Naive thymus-derived CD4-positive, alpha-beta T cell (primary cell): ENCODE measurements at regions of chr17 and their contacts with region 1.

Region 1: DNA sequence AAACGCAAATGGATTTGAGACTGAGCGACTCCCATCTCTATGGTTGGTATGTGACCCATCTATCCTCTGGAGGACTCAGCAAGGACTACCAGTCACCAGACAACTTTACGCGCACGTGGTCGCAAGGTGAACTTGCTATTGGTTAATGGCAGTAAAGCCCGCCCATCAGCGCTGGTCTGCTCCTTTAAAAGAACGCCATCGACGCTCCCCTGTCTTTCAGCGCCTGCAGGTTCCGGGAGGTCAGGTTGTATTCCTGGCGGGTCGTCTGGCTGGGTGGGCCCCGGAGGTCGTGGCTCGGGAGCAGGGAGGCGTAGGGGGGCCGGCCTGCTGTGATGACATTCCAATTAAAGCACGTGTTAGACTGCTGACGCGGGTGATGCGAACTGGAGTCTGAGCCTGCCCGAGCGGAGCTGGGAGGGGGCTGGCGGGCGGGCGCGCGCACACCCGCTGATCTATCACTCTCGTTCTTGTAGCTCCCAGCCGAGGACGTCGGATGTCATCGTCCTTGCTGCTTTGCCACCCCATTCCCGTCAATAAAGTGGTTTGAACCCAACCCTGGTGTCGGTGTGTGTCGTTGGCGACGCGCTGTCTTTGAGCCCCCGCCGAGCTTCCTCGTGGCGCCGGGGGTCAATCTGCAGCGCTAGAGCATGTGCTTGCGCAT is 15.9 kb upstream of the ERN1 start:
- DNase-seq: peak; percentile 85 to 99 (median 96)
- ATAC-seq: peak; percentile 98
- H3K4me3 ChIP-seq: peak overlapping the region; percentile 72
- H3K4me3 Mint-ChIP-seq: no peak overlapping the region
- H3K27ac ChIP-seq: peak overlapping the region; percentile 91
- H3K27ac Mint-ChIP-seq: no peak overlapping the region
- H3K4me1 ChIP-seq: peaks cover 11 to 12% of the 10 kb centered on the region in 2 donors
- H3K4me1 Mint-ChIP-seq: peaks cover 11 to 34% (median 27%) of the 10 kb centered on the region in 7 donors
- H3K27me3 ChIP-seq: no peaks in the 10 kb centered on the region
- H3K27me3 Mint-ChIP-seq: no peaks in the 10 kb centered on the region

Region 2: GRCh38 chr17:63911657-63912426 is 234.0 kb before region 1 on chr17:
- CTCF ChIA-PET with region 1: interaction called, 3 read pairs
- POLR2A ChIA-PET with region 1: no interaction called
- intact Hi-C with region 1: loop called (anchors 5 kb)
- DNase-seq: peak; percentile 30 to 64 (median 49)
- ATAC-seq: peak; percentile 88
- H3K4me3 ChIP-seq: no peak overlapping the region
- H3K4me3 Mint-ChIP-seq: peak overlapping the region in 1 of 10 donors; percentile 25
- H3K27ac ChIP-seq: no peak overlapping the region
- H3K27ac Mint-ChIP-seq: peak overlapping the region in 1 of 9 donors; percentile 78
- H3K4me1 ChIP-seq: no peaks in the 10 kb centered on the region
- H3K4me1 Mint-ChIP-seq: peaks cover 0 to 10% (median 0%) of the 10 kb centered on the region in 7 donors
- H3K27me3 ChIP-seq: no peaks in the 10 kb centered on the region
- H3K27me3 Mint-ChIP-seq: peaks cover 0 to 28% (median 0%) of the 10 kb centered on the region in 5 donors

Region 3: DNA sequence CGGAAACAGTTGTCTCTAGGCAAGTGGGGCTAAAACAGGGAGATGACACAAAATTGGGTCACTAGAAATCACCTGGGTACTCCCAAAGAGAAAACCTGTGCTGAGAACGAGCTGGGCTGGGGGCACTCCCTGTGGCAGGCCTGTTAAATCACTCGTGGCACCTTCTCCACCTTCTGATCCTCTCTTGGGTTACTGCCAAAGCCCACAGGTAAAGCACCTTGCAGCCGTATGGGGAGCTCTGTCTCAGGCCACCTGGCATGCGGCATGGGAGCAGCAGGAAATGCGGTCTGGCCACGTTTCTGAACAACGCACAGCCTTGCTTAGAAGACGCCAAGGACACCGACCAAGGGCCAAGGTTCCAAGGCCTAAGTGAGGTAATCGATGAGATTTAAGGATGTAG is 104.0 kb before region 1 on chr17:
- CTCF ChIA-PET with region 1: no interaction called
- POLR2A ChIA-PET with region 1: interaction called, 11 read pairs
- intact Hi-C with region 1: no loop called
- DNase-seq: no peak
- ATAC-seq: no peak
- H3K4me3 ChIP-seq: no peak overlapping the region
- H3K4me3 Mint-ChIP-seq: no peak overlapping the region
- H3K27ac ChIP-seq: no peak overlapping the region
- H3K27ac Mint-ChIP-seq: peak overlapping the region in 5 of 9 donors; percentile 32 to 75 (median 57)
- H3K4me1 ChIP-seq: no peaks in the 10 kb centered on the region
- H3K4me1 Mint-ChIP-seq: peaks cover 0 to 27% (median 5%) of the 10 kb centered on the region in 7 donors
- H3K27me3 ChIP-seq: no peaks in the 10 kb centered on the region
- H3K27me3 Mint-ChIP-seq: no peaks in the 10 kb centered on the region

Region 4: GRCh38 chr17:64120127-64120810 is 25.6 kb before region 1 on chr17:
- CTCF ChIA-PET with region 1: no interaction called
- POLR2A ChIA-PET with region 1: interaction called, 16 read pairs
- intact Hi-C with region 1: no loop called
- DNase-seq: no peak
- ATAC-seq: no peak
- H3K4me3 ChIP-seq: no peak overlapping the region
- H3K4me3 Mint-ChIP-seq: peak overlapping the region in 7 of 10 donors; percentile 8 to 92 (median 81)
- H3K27ac ChIP-seq: peak overlapping the region; percentile 64
- H3K27ac Mint-ChIP-seq: peak overlapping the region; percentile 77 to 97 (median 90)
- H3K4me1 ChIP-seq: peaks cover 27 to 36% of the 10 kb centered on the region in 2 donors
- H3K4me1 Mint-ChIP-seq: peaks cover 40 to 76% (median 50%) of the 10 kb centered on the region in 7 donors
- H3K27me3 ChIP-seq: no peaks in the 10 kb centered on the region
- H3K27me3 Mint-ChIP-seq: no peaks in the 10 kb centered on the region

Region 5: DNA sequence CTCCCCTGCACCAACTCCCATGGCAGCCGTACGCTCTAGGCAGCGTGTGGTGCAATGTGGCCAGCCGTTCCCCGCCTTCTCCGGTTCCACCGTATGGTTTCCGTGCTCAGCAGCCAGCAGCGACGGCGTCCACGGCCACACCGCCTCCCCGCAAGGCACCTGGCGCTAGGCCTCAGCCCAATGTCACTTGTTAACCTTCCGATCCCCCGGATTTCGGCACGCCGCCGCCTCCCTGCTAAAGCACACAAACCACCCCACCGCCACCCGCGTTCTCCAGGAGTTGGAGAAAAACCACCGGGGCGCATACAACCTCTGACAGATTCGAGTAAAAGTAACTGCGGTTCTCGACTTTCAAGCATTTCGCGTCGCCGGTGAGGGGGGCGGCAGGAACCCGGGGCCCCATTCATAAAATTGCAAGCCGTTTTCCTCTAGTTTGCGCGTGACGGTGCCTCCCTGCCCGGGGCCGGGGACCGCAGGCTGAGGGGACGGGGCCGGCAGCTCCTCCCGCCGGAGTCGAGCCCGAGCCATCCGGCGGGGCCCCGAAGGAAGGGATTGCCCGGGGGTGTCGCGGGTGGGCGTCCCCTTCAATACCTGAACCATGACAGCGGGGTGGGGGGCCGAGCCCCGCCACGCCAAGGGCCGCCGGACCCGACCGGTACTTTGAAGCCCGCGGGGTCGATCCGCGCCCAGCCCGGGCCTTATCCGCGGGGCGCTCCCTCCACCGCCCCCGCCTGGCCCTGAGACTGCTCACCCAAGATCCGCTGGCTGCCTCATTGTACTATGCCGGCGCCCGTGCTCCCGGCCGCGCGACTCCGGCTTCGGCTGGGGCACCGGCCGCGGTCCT is 116.8 kb after region 1 on chr17 and contains the start of gene TEX2:
- CTCF ChIA-PET with region 1: interaction called, 3 read pairs
- POLR2A ChIA-PET with region 1: interaction called, 68 read pairs
- intact Hi-C with region 1: loop called (anchors 1 kb)
- DNase-seq: peak; percentile 44 to 82 (median 74)
- ATAC-seq: peak; percentile 56
- H3K4me3 ChIP-seq: peak within 1 kb of the TSS; percentile 99
- H3K4me3 Mint-ChIP-seq: peak within 1 kb of the TSS; percentile 87 to 98 (median 94)
- H3K27ac ChIP-seq: peak within 1 kb of the TSS; percentile 90
- H3K27ac Mint-ChIP-seq: peak within 1 kb of the TSS; percentile 87 to 98 (median 93)
- H3K4me1 ChIP-seq: peaks cover 18% of the 10 kb centered on the region in 2 donors
- H3K4me1 Mint-ChIP-seq: peaks cover 22 to 50% (median 42%) of the 10 kb centered on the region in 7 donors
- H3K27me3 ChIP-seq: no peaks in the 10 kb centered on the region
- H3K27me3 Mint-ChIP-seq: peaks cover 0 to 11% (median 5%) of the 10 kb centered on the region in 5 donors
- total RNA-seq, gene TEX2: 14.1 to 24.2 (median 14.4) TPM

Region 6: DNA sequence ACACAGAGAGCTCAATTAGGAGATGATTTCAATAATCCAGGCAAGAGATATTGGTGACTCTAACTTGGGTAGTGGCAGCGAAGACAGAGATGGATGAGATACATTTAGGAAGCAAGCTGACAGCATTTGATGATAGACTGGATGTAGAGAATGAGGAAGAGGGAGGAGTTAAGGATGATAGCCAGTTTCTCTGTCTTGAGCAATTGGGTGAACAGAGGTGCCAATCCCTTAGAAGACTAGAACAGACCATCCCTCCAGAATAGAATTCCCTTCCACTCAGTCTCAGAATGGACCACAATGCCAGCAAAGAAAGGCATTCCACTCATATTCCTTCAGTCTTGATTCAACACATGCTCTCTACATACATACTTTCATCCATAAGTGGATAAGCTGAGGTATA is 333.8 kb after region 1 on chr17:
- CTCF ChIA-PET with region 1: no interaction called
- POLR2A ChIA-PET with region 1: no interaction called
- intact Hi-C with region 1: no loop called
- DNase-seq: no peak
- ATAC-seq: no peak
- H3K4me3 ChIP-seq: no peak overlapping the region
- H3K4me3 Mint-ChIP-seq: no peak overlapping the region
- H3K27ac ChIP-seq: no peak overlapping the region
- H3K27ac Mint-ChIP-seq: peak overlapping the region in 5 of 9 donors; percentile 2 to 56 (median 16)
- H3K4me1 ChIP-seq: no peaks in the 10 kb centered on the region
- H3K4me1 Mint-ChIP-seq: peaks cover 5 to 14% (median 12%) of the 10 kb centered on the region in 7 donors
- H3K27me3 ChIP-seq: no peaks in the 10 kb centered on the region
- H3K27me3 Mint-ChIP-seq: no peaks in the 10 kb centered on the region

Region 7: DNA sequence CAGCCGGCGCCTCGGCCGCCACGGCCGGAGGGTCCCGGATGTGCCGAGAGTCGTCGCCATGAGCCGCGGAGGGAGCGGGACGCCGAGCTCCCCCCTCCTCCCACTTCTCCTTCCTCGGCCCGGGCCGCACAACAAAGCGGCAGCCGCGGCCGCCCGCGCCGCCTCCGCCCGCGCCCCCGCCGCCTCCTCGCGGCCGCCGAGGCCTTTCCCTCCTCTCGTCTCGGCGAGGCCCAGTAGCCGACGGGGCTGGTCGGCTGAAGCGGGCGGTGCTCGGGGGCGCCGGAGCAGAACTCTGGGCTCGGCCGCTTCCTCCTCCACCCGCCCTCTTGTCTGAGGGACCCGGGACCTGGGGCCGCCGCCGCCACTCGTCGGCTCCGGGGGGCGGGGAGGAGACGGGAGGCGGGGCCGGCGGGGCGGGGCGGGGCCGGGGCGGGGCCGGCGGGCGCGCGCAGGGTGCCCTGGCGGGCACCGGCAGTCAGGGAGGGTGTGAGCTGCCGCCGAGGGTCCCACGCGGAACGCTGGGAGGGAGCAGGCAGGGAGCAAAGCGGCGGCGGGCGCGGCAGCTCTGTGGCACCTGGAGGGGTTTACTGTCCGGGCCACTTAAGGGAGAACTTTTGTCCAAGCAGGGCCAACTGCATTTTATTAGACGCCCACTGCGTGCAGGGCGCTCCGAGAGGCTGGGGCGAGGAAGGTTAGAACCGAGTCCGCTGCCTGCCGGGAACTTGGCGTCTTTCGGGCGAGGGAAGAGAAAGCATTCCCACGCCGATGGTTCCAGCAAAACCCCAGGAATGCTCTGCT is 516.3 kb after region 1 on chr17 and contains the start of gene SMURF2:
- CTCF ChIA-PET with region 1: no interaction called
- POLR2A ChIA-PET with region 1: no interaction called
- intact Hi-C with region 1: loop called in 1 of 2 experiments (anchors 5 kb)
- DNase-seq: peak; percentile 72 to 84 (median 80)
- ATAC-seq: peak; percentile 96
- H3K4me3 ChIP-seq: peak within 1 kb of the TSS; percentile 77
- H3K4me3 Mint-ChIP-seq: peak within 1 kb of the TSS; percentile 87 to 99 (median 98)
- H3K27ac ChIP-seq: peak within 1 kb of the TSS; percentile 72
- H3K27ac Mint-ChIP-seq: peak within 1 kb of the TSS; percentile 85 to 96 (median 95)
- H3K4me1 ChIP-seq: peaks cover 12 to 18% of the 10 kb centered on the region in 2 donors
- H3K4me1 Mint-ChIP-seq: peaks cover 28 to 42% (median 34%) of the 10 kb centered on the region in 7 donors
- H3K27me3 ChIP-seq: no peaks in the 10 kb centered on the region
- H3K27me3 Mint-ChIP-seq: no peaks in the 10 kb centered on the region
- total RNA-seq, gene SMURF2: 17.0 to 35.7 (median 32.1) TPM